ENCODE measurements at regions of chr9 and their contacts with region 1.

Region 1: DNA sequence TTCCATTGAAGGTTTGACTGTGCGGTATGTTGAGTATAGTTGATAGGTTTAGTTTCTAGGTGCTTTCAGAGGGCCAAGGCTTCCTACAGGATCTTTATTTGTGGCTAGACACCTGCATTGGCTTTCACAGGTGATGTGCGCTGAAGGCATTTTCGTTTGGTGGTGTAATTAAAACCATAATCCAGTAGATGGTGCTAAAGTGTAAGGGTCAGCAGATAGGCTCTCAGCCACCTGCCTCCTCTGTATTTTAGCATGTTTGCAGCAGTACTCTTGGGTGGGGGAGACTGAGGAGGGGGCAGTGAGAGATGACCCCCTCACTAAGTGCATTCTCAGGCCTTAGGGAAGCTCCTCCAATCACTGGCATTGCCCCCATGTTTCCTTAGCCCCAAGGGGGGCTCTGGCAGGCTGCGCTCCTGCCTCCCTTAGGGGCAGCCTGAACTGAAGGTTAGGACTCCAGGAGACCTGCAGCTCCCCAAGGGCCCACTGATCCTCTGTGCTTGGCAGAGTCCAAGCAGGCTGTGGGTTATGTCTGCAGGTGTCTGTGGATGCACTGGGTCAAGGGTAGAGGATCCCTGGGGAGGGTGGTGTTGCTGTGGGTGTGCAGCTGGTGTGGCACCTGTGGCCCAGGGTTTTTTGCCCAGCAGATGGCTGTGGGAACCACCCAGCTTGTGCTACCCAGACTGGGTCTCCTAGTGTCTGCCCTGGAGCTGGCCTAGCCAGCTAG is 23.4 kb downstream of the CDK20 start:
- DNase-seq: peak; percentile 10
- ATAC-seq: peak; percentile 81
- H3K4me3 ChIP-seq: no peak overlapping the region
- H3K27ac ChIP-seq: no peak overlapping the region
- H3K4me1 ChIP-seq: no peaks in the 10 kb centered on the region
- H3K27me3 ChIP-seq: no peaks in the 10 kb centered on the region
- CTCF ChIP-seq: peak; percentile 73

Region 2: GRCh38 chr9:88015606-88016005 is 64.7 kb after region 1 on chr9:
- CTCF ChIA-PET with region 1: no interaction called
- POLR2A ChIA-PET with region 1: no interaction called
- in situ Hi-C with region 1: no loop called
- intact Hi-C with region 1: no loop called
- DNase-seq: no peak
- ATAC-seq: no peak
- H3K4me3 ChIP-seq: no peak overlapping the region
- H3K27ac ChIP-seq: no peak overlapping the region
- H3K4me1 ChIP-seq: no peaks in the 10 kb centered on the region
- H3K27me3 ChIP-seq: no peaks in the 10 kb centered on the region
- CTCF ChIP-seq: no peak

Region 3: GRCh38 chr9:88544241-88544640 is 593.3 kb after region 1 on chr9:
- CTCF ChIA-PET with region 1: no interaction called
- POLR2A ChIA-PET with region 1: no interaction called
- in situ Hi-C with region 1: no loop called
- intact Hi-C with region 1: no loop called
- DNase-seq: no peak
- ATAC-seq: no peak
- H3K4me3 ChIP-seq: no peak overlapping the region
- H3K27ac ChIP-seq: no peak overlapping the region
- H3K4me1 ChIP-seq: no peaks in the 10 kb centered on the region
- H3K27me3 ChIP-seq: no peaks in the 10 kb centered on the region
- CTCF ChIP-seq: no peak

Region 4: GRCh38 chr9:89000973-89001916 is 1050.3 kb after region 1 on chr9:
- CTCF ChIA-PET with region 1: no interaction called
- POLR2A ChIA-PET with region 1: no interaction called
- in situ Hi-C with region 1: no loop called
- intact Hi-C with region 1: loop called (anchors 5 kb)
- DNase-seq: no peak
- ATAC-seq: peak; percentile 93
- H3K4me3 ChIP-seq: no peak overlapping the region
- H3K27ac ChIP-seq: no peak overlapping the region
- H3K4me1 ChIP-seq: no peaks in the 10 kb centered on the region
- H3K27me3 ChIP-seq: no peaks in the 10 kb centered on the region
- CTCF ChIP-seq: peak; percentile 80